ENCODE measurements at regions of chr12 and their contacts with region 1.

Region 1: DNA sequence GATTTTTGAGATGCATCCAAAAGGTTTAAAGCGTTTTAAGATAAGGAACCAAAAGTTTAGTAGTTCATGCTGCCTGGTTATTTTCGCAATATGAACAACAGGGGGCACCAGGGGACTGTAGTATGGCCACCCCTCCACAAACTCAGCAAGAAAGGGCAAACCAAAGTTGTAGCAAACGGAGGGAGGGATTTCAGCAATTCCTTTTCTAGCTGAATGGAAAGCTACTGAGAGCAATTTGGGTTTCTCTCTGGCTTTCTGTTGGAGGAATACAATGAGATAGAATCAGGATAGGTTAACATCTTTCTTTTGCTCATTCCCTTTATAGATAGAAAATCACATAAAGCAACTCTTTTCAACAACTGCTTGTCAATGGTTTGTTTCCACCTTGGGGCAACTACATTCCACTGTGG is 62.5 kb downstream of the DRAM1 start:
- ATAC-seq: peak; percentile 1 to 67 (median 48)
- H3K4me3 ChIP-seq: no peak overlapping the region
- H3K27ac ChIP-seq: no peak overlapping the region
- H3K4me1 ChIP-seq: no peaks in the 10 kb centered on the region

Region 2: GRCh38 chr12:101707131-101707782 is 232.6 kb before region 1 on chr12:
- in situ Hi-C with region 1: no loop called
- ATAC-seq: no peak
- H3K4me3 ChIP-seq: no peak overlapping the region
- H3K27ac ChIP-seq: no peak overlapping the region
- H3K4me1 ChIP-seq: peaks cover 0 to 4% of the 10 kb centered on the region in 2 donors

Region 3: DNA sequence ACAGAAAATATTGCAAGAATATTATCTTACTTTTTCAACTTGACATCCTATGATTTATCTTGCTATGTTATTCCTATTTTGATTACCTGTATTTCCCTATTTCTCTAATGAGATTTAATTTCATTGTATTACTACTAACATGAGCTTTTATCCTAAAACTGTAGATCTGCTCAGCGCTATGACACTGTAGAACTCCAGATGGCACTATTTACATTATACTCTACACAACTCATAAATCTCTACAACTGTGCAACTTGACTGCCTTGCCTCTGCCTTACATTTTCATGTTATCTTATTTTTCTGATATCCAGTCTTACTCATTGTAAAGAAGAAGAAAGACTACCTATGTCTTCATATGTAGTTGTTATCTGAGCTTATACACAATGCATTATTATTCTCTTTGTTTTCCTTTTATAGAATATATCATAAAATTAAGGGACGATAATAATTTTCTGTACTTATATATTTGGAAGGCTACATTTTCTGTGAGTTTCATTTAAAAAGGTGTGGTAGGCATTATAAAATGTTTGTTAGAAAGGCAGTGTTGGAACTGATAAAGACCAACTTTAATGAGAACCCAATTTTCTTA is 155.9 kb after region 1 on chr12:
- in situ Hi-C with region 1: no loop called
- ATAC-seq: peak in 5 of 8 experiments; percentile 39 to 73 (median 66)
- H3K4me3 ChIP-seq: no peak overlapping the region
- H3K27ac ChIP-seq: no peak overlapping the region
- H3K4me1 ChIP-seq: no peaks in the 10 kb centered on the region

Region 4: DNA sequence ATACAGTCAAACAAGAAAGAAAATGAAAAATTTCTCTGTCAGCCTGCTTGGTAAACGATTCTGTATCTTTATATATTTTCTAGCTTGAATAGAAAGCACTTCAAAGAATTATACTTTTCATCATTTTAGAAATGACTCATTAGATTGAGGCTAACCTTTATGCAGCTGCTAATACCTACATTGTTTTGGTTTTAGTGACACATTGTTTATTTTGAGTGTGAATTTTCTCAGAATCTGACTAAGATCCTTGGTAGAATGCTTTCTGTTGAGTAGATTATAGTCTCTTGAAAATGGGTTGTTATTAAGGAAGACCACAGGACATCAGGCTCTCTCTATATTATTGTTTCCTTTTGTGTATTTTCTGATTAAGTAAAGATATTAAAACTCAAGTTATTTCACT is 257.9 kb after region 1 on chr12 and contains the start of gene PMCH:
- in situ Hi-C with region 1: no loop called
- ATAC-seq: no peak
- H3K4me3 ChIP-seq: no peak within 1 kb of the TSS
- H3K27ac ChIP-seq: no peak within 1 kb of the TSS
- H3K4me1 ChIP-seq: no peaks in the 10 kb centered on the region
- total RNA-seq, gene PMCH: not detected

Region 5: GRCh38 chr12:102769319-102769916 is 829.6 kb after region 1 on chr12:
- in situ Hi-C with region 1: loop called in 3 of 9 experiments (anchors 25 kb)
- ATAC-seq: peak in 7 of 8 experiments; percentile 39 to 97 (median 78)
- H3K4me3 ChIP-seq: no peak overlapping the region
- H3K27ac ChIP-seq: no peak overlapping the region
- H3K4me1 ChIP-seq: peaks cover 0 to 2% of the 10 kb centered on the region in 2 donors

Measured in motor neuron (in vitro differentiated cells).